Dorsolateral prefrontal cortex (tissue), 120 donors: ENCODE measurements at regions of chr11 and their contacts with region 1.

Region 1: DNA sequence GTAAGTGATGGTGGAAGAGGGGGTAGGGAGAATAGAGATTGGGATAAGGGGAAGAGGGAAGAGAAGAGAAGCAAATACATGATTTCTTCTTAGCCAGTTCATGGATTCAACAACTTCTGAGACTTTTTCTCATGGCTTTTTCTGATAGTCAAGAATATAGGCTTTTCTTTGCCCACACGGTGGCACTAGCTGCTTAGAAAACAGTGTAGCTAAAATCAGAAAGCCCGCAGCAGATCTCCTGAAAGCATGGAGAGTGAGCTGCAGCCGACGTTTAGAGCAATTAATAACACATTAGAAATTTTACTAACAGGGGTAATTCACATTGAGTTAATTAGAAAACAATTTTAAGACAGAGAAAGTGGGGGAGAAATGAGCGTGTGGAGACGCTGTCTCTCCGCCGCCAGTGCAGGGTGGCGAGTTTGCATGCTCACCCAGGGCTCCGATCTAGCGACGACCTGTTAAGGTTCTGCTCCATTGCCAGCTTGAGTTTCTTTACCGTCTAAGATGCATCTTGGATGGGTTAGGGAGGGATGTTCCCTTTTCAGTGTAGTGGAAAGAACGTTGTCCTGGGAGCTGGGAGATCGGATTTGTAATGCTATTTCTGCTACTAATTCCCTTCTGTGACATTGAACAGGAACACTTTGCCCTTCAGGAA is 3.3 kb upstream of the RAG1 start:
- DNase-seq: peak in 5 of 10 donors; percentile 40 to 79 (median 53)
- H3K4me3 ChIP-seq: peak overlapping the region; percentile 23 to 69 (median 51)
- H3K27ac ChIP-seq: peak overlapping the region in 1 of 59 donors; percentile 60
- H3K27me3 ChIP-seq: no peaks in the 10 kb centered on the region
- CTCF ChIP-seq: peak; percentile 52 to 97 (median 81)

Region 2: GRCh38 chr11:36672813-36673450 is 108.4 kb after region 1 on chr11:
- intact Hi-C with region 1: loop called (anchors 5 kb)
- DNase-seq: peak in 1 of 10 donors; percentile 4
- H3K4me3 ChIP-seq: no peak overlapping the region
- H3K27ac ChIP-seq: no peak overlapping the region
- H3K27me3 ChIP-seq: no peaks in the 10 kb centered on the region
- CTCF ChIP-seq: peak; percentile 70 to 96 (median 88)

Region 3: DNA sequence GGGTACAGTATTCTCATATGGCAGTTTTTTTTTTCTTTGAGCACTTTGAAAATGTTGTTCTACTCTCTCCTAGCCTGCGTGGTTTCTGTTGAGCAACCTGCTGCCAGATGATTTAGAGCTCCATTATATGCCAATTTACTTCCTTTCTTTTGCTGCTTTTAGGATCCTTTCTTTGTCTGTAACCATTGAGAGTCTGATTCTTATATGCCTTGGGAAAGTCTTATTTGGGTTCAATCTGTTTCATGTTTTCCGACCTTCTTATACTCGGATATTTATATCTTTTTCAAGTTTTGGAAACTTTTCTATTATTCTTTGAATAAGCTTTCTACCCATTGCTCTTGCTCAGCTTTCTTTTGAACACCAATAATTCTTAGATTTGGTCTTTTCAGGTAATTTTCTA is 171.6 kb after region 1 on chr11:
- intact Hi-C with region 1: no loop called
- DNase-seq: no peak
- H3K4me3 ChIP-seq: no peak overlapping the region
- H3K27ac ChIP-seq: no peak overlapping the region
- H3K27me3 ChIP-seq: no peaks in the 10 kb centered on the region
- CTCF ChIP-seq: no peak

Region 4: GRCh38 chr11:36746886-36747710 is 182.6 kb after region 1 on chr11:
- intact Hi-C with region 1: loop called (anchors 5 kb)
- DNase-seq: peak; percentile 57 to 85 (median 72)
- H3K4me3 ChIP-seq: no peak overlapping the region
- H3K27ac ChIP-seq: no peak overlapping the region
- H3K27me3 ChIP-seq: peaks cover 0 to 6% (median 0%) of the 10 kb centered on the region in 45 donors
- CTCF ChIP-seq: peak; percentile 77 to 99 (median 96)

Region 5: DNA sequence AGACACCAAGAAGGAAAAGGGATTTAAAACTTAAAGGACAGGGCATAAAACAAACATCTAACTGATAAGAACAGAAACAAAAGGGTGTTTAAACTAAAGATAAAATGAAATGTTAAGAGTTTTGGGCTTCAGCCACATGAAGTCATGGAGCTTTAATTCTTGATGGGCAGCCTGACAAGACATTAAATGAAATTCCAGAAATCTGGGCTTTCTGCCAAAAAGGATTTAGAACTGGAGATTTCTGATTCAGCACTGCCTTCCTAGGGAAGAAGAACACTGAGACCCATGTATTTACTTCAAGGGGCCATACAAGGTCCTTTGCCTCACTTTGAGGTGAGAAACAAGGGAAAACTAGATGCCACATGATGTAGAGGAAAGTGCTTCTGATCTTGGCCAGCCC is 389.5 kb after region 1 on chr11:
- intact Hi-C with region 1: no loop called
- DNase-seq: no peak
- H3K4me3 ChIP-seq: no peak overlapping the region
- H3K27ac ChIP-seq: no peak overlapping the region
- H3K27me3 ChIP-seq: no peaks in the 10 kb centered on the region
- CTCF ChIP-seq: no peak